K562 (cell line): ENCODE measurements at regions of chr20 and their contacts with region 1.

Region 1: GRCh38 chr20:45963059-45964005 is 8.7 kb downstream of the ZNF335 start:
- DNase-seq: peak in 3 of 4 experiments; percentile 15 to 64 (median 33)
- ATAC-seq: peak; percentile 86
- H3K4me3 ChIP-seq: no peak overlapping the region
- H3K27ac ChIP-seq: no peak overlapping the region
- H3K4me1 ChIP-seq: peaks cover 0 to 16% of the 10 kb centered on the region in 2 experiments; a peak in 2 of 5 replicates
- H3K27me3 ChIP-seq: no peaks in the 10 kb centered on the region
- CTCF ChIP-seq: peak; percentile 43 to 66 (median 53); a peak in 5 of 6 replicates
- EP300 ChIP-seq: no peak
- POLR2A ChIP-seq: no peak
- RAD21 ChIP-seq: peak; percentile 69 to 80

Region 2: GRCh38 chr20:45798935-45799642 is 164.2 kb before region 1 on chr20:
- CTCF ChIA-PET with region 1: interaction called, 13 read pairs
- POLR2A ChIA-PET with region 1: interaction called, 3 read pairs
- in situ Hi-C with region 1: loop called (anchors 5 kb)
- intact Hi-C with region 1: loop called (anchors 1 kb)
- DNase-seq: peak; percentile 45 to 81 (median 62)
- ATAC-seq: peak; percentile 98
- H3K4me3 ChIP-seq: no peak overlapping the region
- H3K27ac ChIP-seq: peak overlapping the region; percentile 47; the same call in 1 of the 3 replicates
- H3K4me1 ChIP-seq: peaks cover 0 to 6% of the 10 kb centered on the region in 2 experiments; a peak in 1 of 5 replicates
- H3K27me3 ChIP-seq: no peaks in the 10 kb centered on the region
- CTCF ChIP-seq: peak; percentile 79 to 88 (median 86)
- EP300 ChIP-seq: no peak
- POLR2A ChIP-seq: no peak
- RAD21 ChIP-seq: peak; percentile 81 to 89

Region 3: DNA sequence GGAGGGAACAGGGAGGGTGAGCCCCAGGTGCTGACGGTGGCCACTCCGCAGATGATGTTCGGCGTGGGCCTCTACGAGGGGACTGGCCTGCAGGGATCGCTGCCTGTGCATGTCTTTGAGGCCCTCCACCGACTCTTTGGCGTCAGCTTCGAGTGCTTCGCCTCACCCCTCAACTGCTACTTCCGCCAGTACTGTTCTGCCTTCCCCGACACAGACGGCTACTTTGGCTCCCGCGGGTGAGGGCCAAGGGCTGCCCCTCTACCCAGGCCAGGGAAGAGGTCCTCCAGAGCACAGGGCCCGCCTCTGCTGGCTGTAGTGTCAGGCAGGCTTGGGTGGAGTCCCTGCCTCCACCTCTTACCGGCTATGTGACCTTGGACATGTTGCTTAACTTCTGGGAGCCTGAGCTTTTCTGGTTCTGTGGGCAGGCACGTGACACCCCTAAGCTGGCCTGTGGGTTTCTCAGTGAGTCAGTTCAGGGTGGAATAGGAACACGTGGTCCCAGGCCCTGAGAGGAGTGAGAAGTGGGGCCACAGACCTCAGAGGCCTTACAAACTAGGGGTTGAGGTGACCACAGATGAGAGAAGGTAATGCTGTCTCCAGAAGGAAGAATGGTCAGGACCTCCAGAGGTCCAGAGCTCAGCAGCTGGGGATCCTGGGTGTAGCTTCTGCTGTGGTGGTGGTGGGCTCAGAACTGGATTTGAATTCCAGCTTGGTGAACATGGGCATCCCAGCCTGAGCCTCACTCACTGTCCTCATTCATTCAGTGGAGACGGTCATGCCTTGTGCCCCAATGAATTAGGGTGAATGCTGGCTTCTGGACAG is 17.0 kb before region 1 on chr20:
- CTCF ChIA-PET with region 1: no interaction called
- POLR2A ChIA-PET with region 1: interaction called, 20 read pairs
- in situ Hi-C with region 1: no loop called
- intact Hi-C with region 1: no loop called
- DNase-seq: peak in 1 of 4 experiments; percentile 48
- ATAC-seq: no peak
- H3K4me3 ChIP-seq: no peak overlapping the region
- H3K27ac ChIP-seq: peak overlapping the region; percentile 1; the same call in 1 of the 3 replicates
- H3K4me1 ChIP-seq: peaks cover 20 to 44% of the 10 kb centered on the region in 2 experiments
- H3K27me3 ChIP-seq: no peaks in the 10 kb centered on the region
- CTCF ChIP-seq: no peak
- EP300 ChIP-seq: no peak
- POLR2A ChIP-seq: no peak
- RAD21 ChIP-seq: no peak